Gastrocnemius medialis (tissue), 4 donors: ENCODE measurements at regions of chr2 and their contacts with region 1.

Region 1: GRCh38 chr2:84970868-84971509 is at the start of gene KCMF1:
- DNase-seq: peak; percentile 82 to 83
- ATAC-seq: peak; percentile 70 to 74
- H3K4me3 ChIP-seq: peak within 1 kb of the TSS; percentile 81 to 96 (median 92)
- H3K27ac ChIP-seq: peak within 1 kb of the TSS; percentile 92 to 99 (median 97)
- H3K4me1 ChIP-seq: peaks cover 52 to 53% of the 10 kb centered on the region in 2 donors
- H3K27me3 ChIP-seq: no peaks in the 10 kb centered on the region
- CTCF ChIP-seq: no peak
- POLR2A ChIP-seq: peak in 1 of 2 donors; percentile 4
- total RNA-seq, gene KCMF1: 158 to 178 (median 165) TPM

Region 2: DNA sequence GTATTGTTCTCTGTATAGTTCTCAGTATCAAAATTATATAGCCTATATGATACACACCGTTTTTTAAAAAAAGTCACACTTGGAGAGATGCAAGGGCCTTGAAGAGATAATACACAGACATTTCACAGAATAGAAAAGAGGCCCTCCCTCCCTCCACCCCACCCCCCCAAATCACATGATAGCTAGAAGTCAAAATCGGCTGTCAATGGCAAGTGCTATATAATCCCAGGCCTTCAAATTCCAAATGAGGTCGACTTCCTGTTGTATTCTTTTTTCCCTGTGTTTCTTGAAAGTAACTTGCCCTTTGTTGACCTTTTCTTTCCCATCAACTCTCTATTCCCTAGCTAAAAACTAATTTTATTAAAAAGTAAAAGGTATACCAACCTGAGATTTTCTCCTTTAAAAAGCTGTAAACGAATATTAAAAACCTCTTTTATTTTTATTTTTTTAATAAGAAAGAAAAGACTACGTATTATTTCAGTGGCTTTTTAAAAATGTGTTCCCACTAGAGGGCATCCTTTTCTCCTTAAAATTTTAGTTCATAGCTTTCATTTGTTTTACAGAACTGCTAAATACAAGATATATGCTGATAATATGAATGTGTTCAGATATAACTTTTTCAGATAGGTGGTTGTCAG is 46.5 kb after region 1 on chr2:
- in situ Hi-C with region 1: no loop called
- intact Hi-C with region 1: loop called (anchors 2 kb)
- DNase-seq: no peak
- ATAC-seq: no peak
- H3K4me3 ChIP-seq: no peak overlapping the region
- H3K27ac ChIP-seq: peak overlapping the region in 2 of 4 donors; percentile 12 to 41
- H3K4me1 ChIP-seq: peaks cover 37 to 45% of the 10 kb centered on the region in 2 donors
- H3K27me3 ChIP-seq: no peaks in the 10 kb centered on the region
- CTCF ChIP-seq: peak in 3 of 5 experiments; percentile 17 to 41 (median 21)
- POLR2A ChIP-seq: no peak